Gastrocnemius medialis (tissue), 4 donors: ENCODE measurements at regions of chr13 and their contacts with region 1.

Region 1: DNA sequence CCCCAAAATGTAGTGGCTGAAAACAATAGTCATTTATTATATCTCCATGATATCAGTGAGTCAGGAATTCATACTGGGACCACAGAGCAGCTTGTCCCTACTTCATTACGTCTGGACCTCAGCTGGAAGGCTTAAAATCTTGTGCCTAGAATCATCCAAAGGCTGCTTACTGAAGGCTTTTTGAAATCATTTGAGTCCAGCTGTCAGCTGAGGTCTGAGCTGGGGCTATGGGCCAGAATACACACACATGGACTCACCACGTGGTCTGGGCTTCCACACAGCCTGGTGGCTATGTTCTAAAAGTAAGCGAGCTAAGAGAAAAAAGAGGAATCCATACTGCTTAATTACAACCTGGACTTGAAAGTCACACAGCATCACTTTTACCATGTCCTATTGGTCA is 209.2 kb downstream of the KCTD12 start:
- DNase-seq: peak; percentile 14 to 50
- ATAC-seq: peak; percentile 53 to 76
- H3K4me3 ChIP-seq: no peak overlapping the region
- H3K27ac ChIP-seq: no peak overlapping the region
- H3K4me1 ChIP-seq: no peaks in the 10 kb centered on the region
- H3K27me3 ChIP-seq: no peaks in the 10 kb centered on the region
- CTCF ChIP-seq: no peak
- POLR2A ChIP-seq: no peak

Region 2: GRCh38 chr13:76773448-76774094 is 96.5 kb after region 1 on chr13:
- in situ Hi-C with region 1: no loop called
- intact Hi-C with region 1: loop called (anchors 10 kb)
- DNase-seq: no peak
- ATAC-seq: no peak
- H3K4me3 ChIP-seq: no peak overlapping the region
- H3K27ac ChIP-seq: no peak overlapping the region
- H3K4me1 ChIP-seq: no peaks in the 10 kb centered on the region
- H3K27me3 ChIP-seq: no peaks in the 10 kb centered on the region
- CTCF ChIP-seq: no peak
- POLR2A ChIP-seq: no peak